K562 (cell line): ENCODE measurements at regions of chr4 and their contacts with region 1.

Region 1: DNA sequence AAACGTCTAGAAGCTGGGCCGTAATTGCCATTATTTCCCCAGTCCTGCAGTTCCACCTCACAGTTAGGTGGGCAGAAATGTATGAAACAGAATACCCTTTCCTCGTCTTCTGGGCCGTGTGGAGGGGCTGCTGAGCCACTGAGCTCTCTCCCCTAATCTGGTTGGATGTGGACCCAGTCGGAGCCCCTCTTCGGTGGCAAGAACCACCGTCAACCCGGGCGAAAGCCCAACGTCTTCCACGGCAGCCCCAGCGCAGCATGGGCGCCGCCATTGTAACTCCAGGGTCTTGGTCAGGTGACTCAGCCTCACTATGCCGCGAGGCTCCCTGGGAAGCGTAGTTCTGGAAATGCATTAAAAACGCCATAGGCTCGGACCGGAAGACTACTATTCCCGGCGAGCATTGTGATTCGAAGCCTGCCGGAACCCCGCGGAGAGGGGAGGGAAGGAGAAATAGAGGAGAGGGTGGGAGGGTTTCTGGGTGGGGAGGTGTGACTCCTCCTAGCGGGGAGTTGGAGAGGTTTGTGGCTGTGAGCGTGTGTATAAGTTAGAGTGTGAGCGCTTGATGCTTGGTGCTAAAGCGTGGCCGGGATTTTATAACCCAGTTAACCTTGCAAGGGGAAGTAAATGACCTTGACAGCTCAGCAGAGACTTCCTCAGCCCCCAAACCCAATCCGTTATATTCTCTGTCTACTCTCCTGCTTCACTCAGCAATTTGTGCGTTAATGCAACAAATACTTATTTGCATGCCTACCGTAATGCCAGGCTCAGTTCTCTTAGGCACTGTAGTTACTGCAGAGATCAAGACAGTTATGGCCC is at the start of gene GATB:
- DNase-seq: peak; percentile 89 to 97 (median 92)
- ATAC-seq: peak; percentile 100
- H3K4me3 ChIP-seq: peak within 1 kb of the TSS; percentile 61
- H3K27ac ChIP-seq: peak within 1 kb of the TSS; percentile 49
- H3K4me1 ChIP-seq: peaks cover 0 to 11% of the 10 kb centered on the region in 2 experiments; a peak in 2 of 5 replicates
- H3K27me3 ChIP-seq: 0 out of 5 replicates have a peak, but pooled peaks cover 0 to 5% of the 10 kb centered on the region in 2 experiments
- CTCF ChIP-seq: peak; percentile 36 to 49 (median 49); a peak in 5 of 6 replicates
- EP300 ChIP-seq: no peak
- POLR2A ChIP-seq: peak; percentile 88
- RAD21 ChIP-seq: peak in 1 of 2 experiments; percentile 27; a peak in 1 of 4 replicates
- polyA plus RNA-seq, gene GATB: 15.3 to 26.9 TPM

Region 2: DNA sequence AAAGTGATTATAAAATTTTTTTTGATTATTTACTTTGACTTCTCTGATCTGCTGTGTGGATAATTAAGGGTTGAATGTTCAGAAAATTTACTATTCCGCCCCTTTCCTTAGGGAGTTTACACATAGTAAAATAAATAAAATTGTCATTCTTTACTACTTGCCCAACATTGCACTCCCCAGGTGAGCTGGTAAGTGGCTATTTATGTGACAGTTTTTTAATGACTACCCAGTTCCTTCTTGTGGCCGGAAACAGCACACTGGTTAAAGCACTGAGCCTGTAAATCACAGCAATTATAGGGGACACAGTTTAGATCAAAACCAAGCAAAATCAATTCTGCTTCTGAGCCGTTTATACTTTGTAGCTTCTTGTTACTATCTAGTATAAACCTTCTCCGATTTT is 193.9 kb before region 1 on chr4:
- CTCF ChIA-PET with region 1: no interaction called
- POLR2A ChIA-PET with region 1: no interaction called
- in situ Hi-C with region 1: no loop called
- intact Hi-C with region 1: no loop called
- DNase-seq: no peak
- ATAC-seq: no peak
- H3K4me3 ChIP-seq: no peak overlapping the region
- H3K27ac ChIP-seq: no peak overlapping the region
- H3K4me1 ChIP-seq: no peaks in the 10 kb centered on the region
- H3K27me3 ChIP-seq: no peaks in the 10 kb centered on the region; a peak in 1 of 5 replicates
- CTCF ChIP-seq: no peak
- EP300 ChIP-seq: no peak
- POLR2A ChIP-seq: no peak
- RAD21 ChIP-seq: no peak

Region 3: DNA sequence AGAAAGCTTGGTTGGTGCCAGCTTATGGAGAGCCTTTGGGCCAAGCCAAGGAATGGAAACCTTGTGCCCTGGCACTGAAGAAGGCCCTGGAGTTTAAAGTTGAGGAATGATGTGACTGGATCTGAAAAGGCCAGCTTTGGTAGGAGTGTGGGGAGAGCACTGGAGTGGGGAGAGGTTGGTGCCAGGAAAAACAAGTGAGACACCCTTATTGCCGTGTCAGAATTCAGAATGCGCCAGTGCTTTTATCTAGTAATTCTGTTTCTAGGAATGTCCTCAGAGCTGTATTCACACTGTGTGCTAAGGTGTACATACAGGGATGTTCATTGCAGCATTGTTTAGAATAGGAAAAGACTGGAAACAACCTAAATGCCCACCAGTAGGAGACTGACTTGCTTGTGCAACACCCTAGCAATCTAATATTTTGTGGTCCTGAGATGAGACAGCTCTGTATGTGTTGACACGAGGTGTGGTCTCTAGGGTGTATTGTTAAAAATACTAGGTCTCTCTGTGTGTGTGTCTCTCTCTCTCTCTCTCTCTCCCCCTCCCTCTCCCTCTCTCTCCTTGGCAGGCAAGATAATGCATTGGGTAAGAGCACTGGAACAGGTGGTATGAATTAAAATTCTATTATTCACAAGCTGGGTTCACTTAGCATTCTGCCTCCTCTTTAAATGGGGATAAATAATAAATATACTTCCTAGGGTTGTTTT is 107.9 kb before region 1 on chr4:
- CTCF ChIA-PET with region 1: no interaction called
- POLR2A ChIA-PET with region 1: no interaction called
- in situ Hi-C with region 1: no loop called
- intact Hi-C with region 1: loop called (anchors 5 kb)
- DNase-seq: no peak
- ATAC-seq: no peak
- H3K4me3 ChIP-seq: no peak overlapping the region
- H3K27ac ChIP-seq: no peak overlapping the region
- H3K4me1 ChIP-seq: no peaks in the 10 kb centered on the region
- H3K27me3 ChIP-seq: peaks cover 28 to 46% of the 10 kb centered on the region in 2 experiments
- CTCF ChIP-seq: no peak
- EP300 ChIP-seq: no peak
- POLR2A ChIP-seq: no peak
- RAD21 ChIP-seq: no peak

Region 4: GRCh38 chr4:151674804-151675391 is 86.0 kb before region 1 on chr4:
- CTCF ChIA-PET with region 1: no interaction called
- POLR2A ChIA-PET with region 1: no interaction called
- in situ Hi-C with region 1: no loop called
- intact Hi-C with region 1: loop called (anchors 5 kb)
- DNase-seq: no peak
- ATAC-seq: no peak
- H3K4me3 ChIP-seq: no peak overlapping the region
- H3K27ac ChIP-seq: no peak overlapping the region
- H3K4me1 ChIP-seq: peaks cover 14 to 27% of the 10 kb centered on the region in 2 experiments
- H3K27me3 ChIP-seq: no peaks in the 10 kb centered on the region
- CTCF ChIP-seq: no peak
- EP300 ChIP-seq: no peak
- POLR2A ChIP-seq: no peak
- RAD21 ChIP-seq: no peak